ENCODE measurements at regions of chr2 and their contacts with region 1.

Region 1: DNA sequence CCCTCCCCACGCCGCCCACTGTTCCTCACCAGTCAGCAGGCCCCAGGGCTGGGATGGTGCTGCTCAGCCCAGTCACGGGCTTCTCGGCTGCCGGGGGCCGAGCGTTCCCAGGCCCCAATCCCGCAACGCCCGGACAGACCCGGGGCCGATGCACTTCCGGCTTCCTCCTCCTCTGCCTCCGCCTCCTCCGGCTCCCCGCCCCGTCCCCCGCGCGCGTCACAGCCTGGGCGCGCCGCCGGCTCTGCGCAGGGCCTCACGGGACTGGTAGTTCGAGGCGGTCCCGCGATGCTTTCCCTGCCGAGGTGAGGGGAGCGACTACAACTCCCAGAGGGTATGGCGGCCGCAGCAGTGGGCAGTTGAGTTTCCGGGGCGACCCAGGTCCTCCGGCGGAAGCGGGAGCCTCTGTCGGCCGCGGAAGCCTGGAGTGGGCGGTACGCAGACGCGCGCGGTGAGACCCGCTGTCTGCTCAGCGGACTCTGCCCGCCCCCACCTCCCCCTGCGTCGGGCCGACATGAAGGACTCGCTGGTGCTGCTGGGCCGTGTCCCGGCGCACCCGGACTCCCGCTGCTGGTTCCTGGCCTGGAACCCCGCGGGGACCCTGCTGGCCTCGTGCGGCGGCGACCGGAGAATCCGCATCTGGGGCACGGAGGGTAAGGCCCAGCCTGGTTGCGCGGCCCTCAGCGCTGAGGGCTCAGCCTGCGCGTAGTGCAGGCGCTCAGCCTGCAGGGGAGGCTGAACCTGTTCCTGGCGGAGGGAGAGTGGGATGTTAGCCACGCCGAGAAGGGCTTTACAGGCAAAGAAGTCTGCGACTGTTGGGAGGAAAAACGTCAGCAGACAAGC is at the starts of genes CIAO1 and TMEM127:
- DNase-seq: peak; percentile 97
- ATAC-seq: peak; percentile 93
- H3K4me3 Mint-ChIP-seq: peak within 1 kb of the TSS; percentile 97
- H3K27ac Mint-ChIP-seq: peak within 1 kb of the TSS; percentile 83
- H3K4me1 Mint-ChIP-seq: peaks cover 45% of the 10 kb centered on the region
- H3K27me3 Mint-ChIP-seq: no peaks in the 10 kb centered on the region
- CTCF ChIP-seq: no peak
- total RNA-seq, gene CIAO1: 65.6 and 71.6 TPM in 2 replicates
- total RNA-seq, gene TMEM127: 36.6 and 43.2 TPM in 2 replicates

Region 2: GRCh38 chr2:96116879-96117697 is 149.0 kb before region 1 on chr2:
- CTCF ChIA-PET with region 1: interaction called, 4 read pairs
- POLR2A ChIA-PET with region 1: no interaction called
- intact Hi-C with region 1: loop called (anchors 1 kb)
- DNase-seq: peak; percentile 82
- ATAC-seq: peak; percentile 79
- H3K4me3 Mint-ChIP-seq: peak overlapping the region; percentile 71
- H3K27ac Mint-ChIP-seq: peak overlapping the region; percentile 41
- H3K4me1 Mint-ChIP-seq: peaks cover 25% of the 10 kb centered on the region
- H3K27me3 Mint-ChIP-seq: peaks cover 22% of the 10 kb centered on the region
- CTCF ChIP-seq: peak; percentile 56

Region 3: GRCh38 chr2:96174251-96175144 is 91.6 kb before region 1 on chr2:
- CTCF ChIA-PET with region 1: interaction called, 12 read pairs
- POLR2A ChIA-PET with region 1: interaction called, 13 read pairs
- intact Hi-C with region 1: no loop called
- DNase-seq: peak; percentile 76
- ATAC-seq: peak; percentile 99
- H3K4me3 Mint-ChIP-seq: no peak overlapping the region
- H3K27ac Mint-ChIP-seq: no peak overlapping the region
- H3K4me1 Mint-ChIP-seq: peaks cover 20% of the 10 kb centered on the region
- H3K27me3 Mint-ChIP-seq: no peaks in the 10 kb centered on the region
- CTCF ChIP-seq: peak; percentile 75

Region 4: DNA sequence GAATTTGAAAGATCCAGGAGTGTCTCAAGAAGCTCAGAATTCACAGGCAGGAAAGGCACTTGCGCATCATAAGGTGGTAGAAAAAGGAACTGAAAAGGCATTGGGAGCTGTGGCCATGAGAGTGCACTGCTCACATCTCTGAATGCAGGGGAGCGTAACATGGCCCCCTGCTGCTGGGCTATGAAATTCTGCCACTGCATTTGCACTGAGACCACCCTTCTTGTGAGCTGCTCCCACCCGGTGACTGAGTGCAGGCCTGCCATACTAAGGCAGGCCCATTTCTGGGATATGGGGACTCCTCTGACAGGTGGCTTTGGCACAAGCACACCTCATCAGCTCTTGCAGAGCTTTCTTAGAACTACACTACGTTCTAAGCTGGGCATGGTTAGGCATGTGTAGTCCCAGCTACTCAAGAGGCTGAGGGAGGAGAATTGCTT is 32.2 kb before region 1 on chr2:
- CTCF ChIA-PET with region 1: interaction called, 22 read pairs
- POLR2A ChIA-PET with region 1: interaction called, 13 read pairs
- intact Hi-C with region 1: loop called (anchors 2 kb)
- DNase-seq: peak; percentile 37
- ATAC-seq: peak; percentile 99
- H3K4me3 Mint-ChIP-seq: peak overlapping the region; percentile 70
- H3K27ac Mint-ChIP-seq: peak overlapping the region; percentile 84
- H3K4me1 Mint-ChIP-seq: peaks cover 17% of the 10 kb centered on the region
- H3K27me3 Mint-ChIP-seq: no peaks in the 10 kb centered on the region
- CTCF ChIP-seq: no peak

Region 5: GRCh38 chr2:96320728-96321622 is 54.9 kb after region 1 on chr2:
- CTCF ChIA-PET with region 1: no interaction called
- POLR2A ChIA-PET with region 1: interaction called, 6 read pairs
- intact Hi-C with region 1: loop called (anchors 5 kb)
- DNase-seq: peak; percentile 34
- ATAC-seq: peak; percentile 15
- H3K4me3 Mint-ChIP-seq: peak overlapping the region; percentile 94
- H3K27ac Mint-ChIP-seq: peak overlapping the region; percentile 85
- H3K4me1 Mint-ChIP-seq: peaks cover 55% of the 10 kb centered on the region
- H3K27me3 Mint-ChIP-seq: no peaks in the 10 kb centered on the region
- CTCF ChIP-seq: no peak

Region 6: DNA sequence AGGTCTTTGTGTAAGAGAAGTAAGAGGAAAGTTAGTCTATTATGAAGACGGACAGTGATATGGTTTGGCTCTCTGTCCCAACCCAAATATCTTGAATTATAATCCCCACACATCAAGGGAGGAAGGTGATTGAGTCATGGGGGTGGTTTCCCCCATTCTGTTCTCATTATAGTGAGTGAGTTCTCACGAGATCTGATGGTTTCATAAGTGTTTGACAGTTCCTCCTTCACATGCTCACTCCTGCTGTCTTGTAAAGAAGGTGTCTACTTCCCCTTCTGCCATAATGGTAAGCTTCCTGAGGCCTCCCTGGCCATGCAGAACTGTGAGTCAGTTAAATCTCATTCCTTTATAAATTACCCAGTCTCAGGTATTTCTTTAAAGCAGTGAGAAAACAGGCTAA is 171.5 kb after region 1 on chr2:
- CTCF ChIA-PET with region 1: no interaction called
- POLR2A ChIA-PET with region 1: no interaction called
- intact Hi-C with region 1: no loop called
- DNase-seq: no peak
- ATAC-seq: no peak
- H3K4me3 Mint-ChIP-seq: no peak overlapping the region
- H3K27ac Mint-ChIP-seq: no peak overlapping the region
- H3K4me1 Mint-ChIP-seq: no peaks in the 10 kb centered on the region
- H3K27me3 Mint-ChIP-seq: peaks cover 18% of the 10 kb centered on the region
- CTCF ChIP-seq: no peak

Region 7: GRCh38 chr2:96536445-96537065 is 270.5 kb after region 1 on chr2 and contains the start of gene ARID5A:
- CTCF ChIA-PET with region 1: no interaction called
- POLR2A ChIA-PET with region 1: interaction called, 5 read pairs
- intact Hi-C with region 1: loop called (anchors 5 kb)
- DNase-seq: peak; percentile 79
- ATAC-seq: peak; percentile 74
- H3K4me3 Mint-ChIP-seq: peak within 1 kb of the TSS; percentile 91
- H3K27ac Mint-ChIP-seq: peak within 1 kb of the TSS; percentile 90
- H3K4me1 Mint-ChIP-seq: peaks cover 53% of the 10 kb centered on the region
- H3K27me3 Mint-ChIP-seq: no peaks in the 10 kb centered on the region
- CTCF ChIP-seq: no peak
- total RNA-seq, gene ARID5A: 73.4 and 83.5 TPM in 2 replicates

Region 8: DNA sequence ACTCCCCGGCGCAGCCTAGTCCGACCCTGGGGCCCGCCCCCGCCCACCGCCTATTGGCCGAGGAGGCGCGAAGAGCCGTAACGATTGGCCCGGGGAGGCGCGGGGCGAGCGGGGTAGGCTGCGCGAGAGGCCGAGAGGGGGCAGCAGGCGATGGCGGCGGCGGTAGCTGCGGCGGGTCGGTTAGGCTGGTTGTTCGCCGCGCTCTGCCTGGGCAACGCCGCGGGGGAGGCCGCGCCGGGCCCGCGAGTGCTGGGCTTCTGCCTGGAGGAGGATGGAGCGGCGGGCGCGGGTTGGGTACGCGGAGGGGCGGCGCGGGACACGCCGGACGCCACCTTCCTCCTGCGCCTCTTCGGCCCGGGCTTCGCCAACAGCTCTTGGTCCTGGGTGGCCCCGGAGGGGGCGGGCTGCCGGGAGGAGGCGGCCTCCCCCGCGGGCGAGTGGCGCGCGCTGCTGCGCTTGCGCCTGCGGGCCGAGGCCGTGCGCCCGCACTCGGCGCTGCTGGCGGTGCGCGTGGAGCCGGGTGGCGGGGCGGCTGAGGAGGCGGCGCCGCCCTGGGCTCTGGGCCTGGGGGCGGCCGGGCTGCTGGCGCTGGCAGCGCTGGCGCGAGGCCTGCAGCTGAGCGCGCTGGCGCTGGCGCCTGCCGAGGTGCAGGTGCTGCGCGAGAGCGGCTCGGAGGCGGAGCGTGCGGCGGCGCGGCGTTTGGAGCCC is 550.2 kb after region 1 on chr2 and contains the start of gene CNNM3:
- CTCF ChIA-PET with region 1: no interaction called
- POLR2A ChIA-PET with region 1: no interaction called
- intact Hi-C with region 1: loop called (anchors 5 kb)
- DNase-seq: peak; percentile 97
- ATAC-seq: peak; percentile 93
- H3K4me3 Mint-ChIP-seq: peak within 1 kb of the TSS; percentile 88
- H3K27ac Mint-ChIP-seq: peak within 1 kb of the TSS; percentile 83
- H3K4me1 Mint-ChIP-seq: peaks cover 56% of the 10 kb centered on the region
- H3K27me3 Mint-ChIP-seq: no peaks in the 10 kb centered on the region
- CTCF ChIP-seq: no peak
- total RNA-seq, gene CNNM3: 19.0 and 20.3 TPM in 2 replicates

Measured in activated B cell treated with CpG ODN at 0.5 μM for 24 hours (primary cell).